Caco-2 (cell line): ENCODE measurements at regions of chr13 and their contacts with region 1.

Region 1: GRCh38 chr13:111980146-111980929 is 86.6 kb upstream of the SOX1 start:
- DNase-seq: no peak
- H3K4me3 ChIP-seq: no peak overlapping the region
- H3K4me3 Mint-ChIP-seq: no peak overlapping the region
- H3K27ac Mint-ChIP-seq: no peak overlapping the region
- H3K4me1 ChIP-seq: no peaks in the 10 kb centered on the region
- H3K4me1 Mint-ChIP-seq: no peaks in the 10 kb centered on the region
- H3K27me3 ChIP-seq: no peaks in the 10 kb centered on the region
- H3K27me3 Mint-ChIP-seq: peaks cover 6% of the 10 kb centered on the region
- CTCF ChIP-seq: no peak

Region 2: GRCh38 chr13:111789420-111789819 is 190.9 kb before region 1 on chr13:
- CTCF ChIA-PET with region 1: no interaction called
- POLR2A ChIA-PET with region 1: no interaction called
- intact Hi-C with region 1: no loop called
- DNase-seq: no peak
- H3K4me3 ChIP-seq: no peak overlapping the region
- H3K4me3 Mint-ChIP-seq: no peak overlapping the region
- H3K27ac Mint-ChIP-seq: no peak overlapping the region
- H3K4me1 ChIP-seq: no peaks in the 10 kb centered on the region
- H3K4me1 Mint-ChIP-seq: no peaks in the 10 kb centered on the region
- H3K27me3 ChIP-seq: no peaks in the 10 kb centered on the region
- H3K27me3 Mint-ChIP-seq: peaks cover 4% of the 10 kb centered on the region
- CTCF ChIP-seq: no peak

Region 3: DNA sequence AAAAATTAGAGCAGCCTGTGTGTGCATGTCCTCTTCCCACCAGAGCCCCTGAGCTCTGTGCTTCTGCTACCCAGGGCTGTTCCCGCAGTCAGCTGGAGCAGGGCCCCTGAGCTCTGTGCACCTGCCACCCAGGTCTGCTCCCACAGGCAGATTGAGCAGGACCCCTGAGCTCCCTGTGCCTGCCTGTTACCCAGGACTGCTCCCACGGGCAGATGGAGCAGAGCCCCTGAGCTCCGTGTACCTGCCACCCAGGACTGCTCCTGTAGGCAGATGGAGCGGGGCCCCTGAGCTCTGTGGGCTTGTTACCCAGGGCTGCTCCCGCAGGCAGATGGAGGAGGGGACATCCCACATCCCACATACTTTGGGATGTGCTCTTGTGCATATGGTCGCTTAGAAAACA is 100.2 kb before region 1 on chr13:
- CTCF ChIA-PET with region 1: no interaction called
- POLR2A ChIA-PET with region 1: no interaction called
- intact Hi-C with region 1: no loop called
- DNase-seq: peak in 1 of 2 experiments; percentile 15
- H3K4me3 ChIP-seq: no peak overlapping the region
- H3K4me3 Mint-ChIP-seq: no peak overlapping the region
- H3K27ac Mint-ChIP-seq: no peak overlapping the region
- H3K4me1 ChIP-seq: no peaks in the 10 kb centered on the region
- H3K4me1 Mint-ChIP-seq: no peaks in the 10 kb centered on the region
- H3K27me3 ChIP-seq: no peaks in the 10 kb centered on the region
- H3K27me3 Mint-ChIP-seq: peaks cover 21% of the 10 kb centered on the region
- CTCF ChIP-seq: no peak

Region 4: GRCh38 chr13:112003396-112003795 is 23.1 kb after region 1 on chr13:
- CTCF ChIA-PET with region 1: no interaction called
- POLR2A ChIA-PET with region 1: no interaction called
- intact Hi-C with region 1: loop called (anchors 1 kb)
- DNase-seq: no peak
- H3K4me3 ChIP-seq: no peak overlapping the region
- H3K4me3 Mint-ChIP-seq: no peak overlapping the region
- H3K27ac Mint-ChIP-seq: no peak overlapping the region
- H3K4me1 ChIP-seq: no peaks in the 10 kb centered on the region
- H3K4me1 Mint-ChIP-seq: no peaks in the 10 kb centered on the region
- H3K27me3 ChIP-seq: no peaks in the 10 kb centered on the region
- H3K27me3 Mint-ChIP-seq: peaks cover 15% of the 10 kb centered on the region
- CTCF ChIP-seq: no peak

Region 5: GRCh38 chr13:112489199-112489598 is 508.9 kb after region 1 on chr13:
- CTCF ChIA-PET with region 1: no interaction called
- POLR2A ChIA-PET with region 1: no interaction called
- intact Hi-C with region 1: no loop called
- DNase-seq: no peak
- H3K4me3 ChIP-seq: no peak overlapping the region
- H3K4me3 Mint-ChIP-seq: no peak overlapping the region
- H3K27ac Mint-ChIP-seq: no peak overlapping the region
- H3K4me1 ChIP-seq: no peaks in the 10 kb centered on the region
- H3K4me1 Mint-ChIP-seq: no peaks in the 10 kb centered on the region
- H3K27me3 ChIP-seq: no peaks in the 10 kb centered on the region
- H3K27me3 Mint-ChIP-seq: no peaks in the 10 kb centered on the region
- CTCF ChIP-seq: no peak